IMR-90 (cell line): ENCODE measurements at regions of chr4 and their contacts with region 1.

Region 1: GRCh38 chr4:69194166-69194565 is 20.4 kb downstream of the UGT2B11 start:
- DNase-seq: no peak
- ATAC-seq: no peak
- H3K4me3 ChIP-seq: no peak overlapping the region
- H3K27ac ChIP-seq: no peak overlapping the region
- H3K4me1 ChIP-seq: no peaks in the 10 kb centered on the region
- H3K27me3 ChIP-seq: no peaks in the 10 kb centered on the region
- CTCF ChIP-seq: no peak
- POLR2A ChIP-seq: no peak
- RAD21 ChIP-seq: no peak

Region 2: GRCh38 chr4:69156913-69157312 is 37.3 kb before region 1 on chr4:
- CTCF ChIA-PET with region 1: no interaction called
- POLR2A ChIA-PET with region 1: no interaction called
- dilution Hi-C with region 1: no loop called
- in situ Hi-C with region 1: no loop called
- intact Hi-C with region 1: loop called (anchors 1 kb)
- DNase-seq: no peak
- ATAC-seq: no peak
- H3K4me3 ChIP-seq: no peak overlapping the region
- H3K27ac ChIP-seq: no peak overlapping the region
- H3K4me1 ChIP-seq: no peaks in the 10 kb centered on the region
- H3K27me3 ChIP-seq: no peaks in the 10 kb centered on the region
- CTCF ChIP-seq: peak; percentile 33; the same call in 1 of the 2 replicates
- POLR2A ChIP-seq: no peak
- RAD21 ChIP-seq: peak; percentile 34

Region 3: GRCh38 chr4:70288651-70289050 is 1094.5 kb after region 1 on chr4:
- CTCF ChIA-PET with region 1: no interaction called
- POLR2A ChIA-PET with region 1: no interaction called
- dilution Hi-C with region 1: no loop called
- in situ Hi-C with region 1: no loop called
- intact Hi-C with region 1: no loop called
- DNase-seq: no peak
- ATAC-seq: no peak
- H3K4me3 ChIP-seq: no peak overlapping the region
- H3K27ac ChIP-seq: no peak overlapping the region
- H3K4me1 ChIP-seq: no peaks in the 10 kb centered on the region
- H3K27me3 ChIP-seq: no peaks in the 10 kb centered on the region
- CTCF ChIP-seq: no peak
- POLR2A ChIP-seq: no peak
- RAD21 ChIP-seq: no peak